ENCODE measurements at regions of chr6 and their contacts with region 1.

Region 1: DNA sequence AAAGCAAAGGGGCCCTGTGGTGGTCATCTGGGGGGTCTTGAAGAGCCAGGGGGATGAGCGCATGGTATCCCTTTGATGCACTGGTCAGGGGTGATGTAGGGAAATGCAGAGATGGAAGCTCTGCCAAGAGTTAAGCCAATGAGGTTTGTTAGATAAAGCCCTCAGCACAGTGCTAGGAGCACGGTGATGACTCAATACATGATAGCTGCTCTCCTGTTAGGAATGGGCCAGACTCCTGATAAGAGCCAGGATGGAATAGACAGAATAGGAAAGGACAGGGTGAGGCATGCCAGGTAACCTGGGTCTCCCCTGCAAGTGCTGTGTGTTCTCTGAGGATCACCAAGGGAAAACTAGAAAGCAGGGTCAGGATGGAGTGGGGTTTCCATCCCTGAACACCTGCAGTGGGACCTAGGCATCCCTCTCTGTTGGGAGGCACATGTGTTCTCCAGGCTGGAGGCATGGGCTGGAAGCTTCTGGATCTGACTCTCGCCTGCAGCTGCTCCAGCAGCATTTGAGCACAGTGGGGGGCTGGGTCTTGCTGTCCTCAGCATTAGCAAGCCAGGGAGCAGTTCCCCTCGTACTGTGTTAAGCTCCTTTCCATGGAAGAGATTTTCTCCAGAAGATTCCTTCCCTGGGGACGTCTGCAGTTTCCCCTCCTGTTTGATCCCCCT is 71.8 kb upstream of the TIAM2 start:
- DNase-seq: no peak
- H3K4me3 Mint-ChIP-seq: no peak overlapping the region
- H3K27ac Mint-ChIP-seq: no peak overlapping the region
- H3K4me1 Mint-ChIP-seq: peaks cover 10% of the 10 kb centered on the region
- H3K27me3 Mint-ChIP-seq: no peaks in the 10 kb centered on the region

Region 2: DNA sequence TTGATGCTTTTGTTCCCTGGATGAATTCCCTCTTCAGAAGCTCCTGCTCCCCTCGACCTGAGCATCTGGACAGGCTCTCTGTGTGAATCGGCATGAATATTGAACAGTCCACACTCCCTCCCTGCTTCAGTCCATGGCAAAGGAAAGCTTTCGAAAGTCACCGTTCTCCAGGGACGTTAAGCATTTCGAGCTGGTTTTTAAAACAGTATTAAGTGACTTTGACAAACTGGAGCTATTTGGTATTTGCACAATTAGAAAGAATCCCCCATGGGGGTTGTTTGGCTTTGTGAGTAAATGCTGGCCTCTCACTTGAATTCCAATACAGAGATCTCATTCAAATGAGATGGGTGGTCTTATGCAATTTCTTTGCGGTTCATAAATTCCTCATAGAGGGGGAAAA is 13.5 kb before region 1 on chr6:
- CTCF ChIA-PET with region 1: interaction called, 11 read pairs
- POLR2A ChIA-PET with region 1: no interaction called
- DNase-seq: no peak
- H3K4me3 Mint-ChIP-seq: no peak overlapping the region
- H3K27ac Mint-ChIP-seq: no peak overlapping the region
- H3K4me1 Mint-ChIP-seq: no peaks in the 10 kb centered on the region
- H3K27me3 Mint-ChIP-seq: no peaks in the 10 kb centered on the region

Region 3: GRCh38 chr6:155177363-155177961 is 254.1 kb after region 1 on chr6:
- CTCF ChIA-PET with region 1: interaction called, 15 read pairs
- POLR2A ChIA-PET with region 1: no interaction called
- DNase-seq: peak; percentile 71
- H3K4me3 Mint-ChIP-seq: no peak overlapping the region
- H3K27ac Mint-ChIP-seq: no peak overlapping the region
- H3K4me1 Mint-ChIP-seq: peaks cover 25% of the 10 kb centered on the region
- H3K27me3 Mint-ChIP-seq: no peaks in the 10 kb centered on the region